ENCODE measurements at regions of chr5 and their contacts with region 1.

Region 1: GRCh38 chr5:148972958-148973357 is 89.9 kb downstream of the SH3TC2 start:
- DNase-seq: peak; percentile 92
- H3K4me3 ChIP-seq: no peak overlapping the region
- H3K27ac ChIP-seq: peak overlapping the region; percentile 99
- H3K4me1 ChIP-seq: peaks cover 46% of the 10 kb centered on the region
- H3K27me3 ChIP-seq: no peaks in the 10 kb centered on the region
- CTCF ChIP-seq: no peak
- POLR2A ChIP-seq: peak; percentile 69

Region 2: DNA sequence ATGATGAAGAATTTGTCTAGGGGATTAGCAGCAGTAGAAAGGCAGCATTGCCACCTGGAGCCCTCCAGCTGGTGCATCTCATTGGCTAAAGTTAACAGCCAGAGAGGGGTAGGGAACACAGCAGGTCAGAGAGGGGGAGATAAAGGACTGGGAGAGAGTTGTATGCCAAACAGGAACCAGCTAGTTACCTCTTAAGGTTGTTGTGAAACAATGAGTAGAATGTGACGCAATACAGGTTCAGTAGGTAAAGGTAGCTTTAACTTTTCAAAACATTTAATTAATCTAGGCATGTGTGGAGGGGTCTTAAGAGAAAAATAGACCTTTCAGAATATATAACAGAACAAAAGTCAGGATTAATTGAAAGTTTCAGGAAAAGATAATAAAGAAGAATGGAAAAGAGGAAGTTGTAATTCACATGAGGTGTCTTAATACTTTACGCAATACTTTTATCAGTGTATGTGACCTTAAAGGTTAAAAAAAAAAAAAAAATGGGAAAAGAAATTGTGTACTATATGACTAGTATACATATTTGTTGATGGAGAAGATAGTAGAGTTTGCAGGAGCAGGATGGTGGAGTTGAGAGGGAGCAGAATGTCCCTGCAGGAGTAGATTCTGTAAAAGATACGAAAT is 574.9 kb before region 1 on chr5:
- CTCF ChIA-PET with region 1: no interaction called
- POLR2A ChIA-PET with region 1: no interaction called
- dilution Hi-C with region 1: no loop called
- intact Hi-C with region 1: loop called (anchors 5 kb)
- DNase-seq: no peak
- H3K4me3 ChIP-seq: no peak overlapping the region
- H3K27ac ChIP-seq: peak overlapping the region; percentile 55
- H3K4me1 ChIP-seq: peaks cover 45% of the 10 kb centered on the region
- H3K27me3 ChIP-seq: no peaks in the 10 kb centered on the region
- CTCF ChIP-seq: no peak
- POLR2A ChIP-seq: no peak

Region 3: DNA sequence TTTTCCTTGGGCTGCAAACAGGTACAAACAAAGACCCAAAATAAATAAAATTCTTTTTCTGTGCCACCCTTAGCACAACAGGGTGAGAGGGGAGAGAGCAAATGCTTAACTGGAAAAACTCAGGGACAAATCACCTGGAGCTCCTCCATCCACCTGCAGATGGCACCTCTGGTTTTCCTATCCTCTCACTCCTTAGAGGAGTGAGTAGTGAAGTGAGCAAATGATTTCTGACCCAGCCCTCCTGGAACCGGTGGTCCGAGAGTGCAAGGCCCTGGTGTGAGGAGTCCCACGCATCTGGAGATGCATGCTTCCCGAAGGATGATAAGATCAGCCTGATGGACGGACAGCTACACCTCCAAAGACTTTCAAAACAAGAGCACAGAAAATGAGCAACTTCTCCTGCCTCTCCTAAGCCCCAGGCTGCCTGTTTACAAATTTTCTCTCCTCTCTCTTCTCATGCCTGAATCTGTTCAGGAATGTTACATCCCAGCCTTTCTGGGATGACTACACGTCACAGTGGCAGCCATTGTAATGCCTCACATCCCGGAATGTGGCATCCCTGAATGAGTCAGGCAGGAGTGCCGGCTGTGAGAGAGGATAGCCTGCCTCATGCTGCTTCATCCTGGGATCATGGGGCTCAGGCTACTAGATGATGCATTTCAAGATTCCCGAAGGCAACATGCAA is 60.1 kb before region 1 on chr5:
- CTCF ChIA-PET with region 1: interaction called, 3 read pairs
- POLR2A ChIA-PET with region 1: no interaction called
- dilution Hi-C with region 1: no loop called
- intact Hi-C with region 1: loop called (anchors 2 kb)
- DNase-seq: peak; percentile 79
- H3K4me3 ChIP-seq: no peak overlapping the region
- H3K27ac ChIP-seq: peak overlapping the region; percentile 96
- H3K4me1 ChIP-seq: peaks cover 55% of the 10 kb centered on the region
- H3K27me3 ChIP-seq: no peaks in the 10 kb centered on the region
- CTCF ChIP-seq: peak in 1 of 2 donors; percentile 4
- POLR2A ChIP-seq: no peak

Region 4: DNA sequence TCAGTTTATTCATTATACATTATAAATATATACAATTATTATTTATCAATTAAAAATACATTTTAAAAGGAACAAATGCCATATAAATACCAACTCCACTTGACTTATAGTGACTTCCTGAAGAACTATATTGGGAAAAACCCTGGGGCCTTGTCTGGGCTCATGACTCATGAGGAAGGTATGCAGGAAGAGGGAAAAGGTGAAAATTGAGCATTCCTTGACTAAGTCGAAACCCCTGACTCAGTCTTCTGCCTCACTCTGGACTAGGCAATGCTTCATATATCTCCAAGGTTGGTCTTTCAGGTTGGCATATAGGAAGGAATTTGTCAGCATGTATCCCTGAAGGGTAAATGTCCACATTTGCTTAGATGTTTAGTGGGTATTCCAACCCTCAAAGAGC is 11.4 kb after region 1 on chr5:
- CTCF ChIA-PET with region 1: interaction called, 9 read pairs
- POLR2A ChIA-PET with region 1: no interaction called
- dilution Hi-C with region 1: no loop called
- intact Hi-C with region 1: loop called (anchors 1 kb)
- DNase-seq: peak; percentile 52
- H3K4me3 ChIP-seq: no peak overlapping the region
- H3K27ac ChIP-seq: peak overlapping the region; percentile 61
- H3K4me1 ChIP-seq: peaks cover 15% of the 10 kb centered on the region
- H3K27me3 ChIP-seq: no peaks in the 10 kb centered on the region
- CTCF ChIP-seq: no peak
- POLR2A ChIP-seq: no peak

Region 5: GRCh38 chr5:148998174-148998797 is 25.3 kb after region 1 on chr5:
- CTCF ChIA-PET with region 1: interaction called, 14 read pairs
- POLR2A ChIA-PET with region 1: no interaction called
- dilution Hi-C with region 1: no loop called
- intact Hi-C with region 1: loop called (anchors 1 kb)
- DNase-seq: peak; percentile 68
- H3K4me3 ChIP-seq: no peak overlapping the region
- H3K27ac ChIP-seq: no peak overlapping the region
- H3K4me1 ChIP-seq: peaks cover 13% of the 10 kb centered on the region
- H3K27me3 ChIP-seq: no peaks in the 10 kb centered on the region
- CTCF ChIP-seq: peak; percentile 54 to 62
- POLR2A ChIP-seq: no peak

Region 6: DNA sequence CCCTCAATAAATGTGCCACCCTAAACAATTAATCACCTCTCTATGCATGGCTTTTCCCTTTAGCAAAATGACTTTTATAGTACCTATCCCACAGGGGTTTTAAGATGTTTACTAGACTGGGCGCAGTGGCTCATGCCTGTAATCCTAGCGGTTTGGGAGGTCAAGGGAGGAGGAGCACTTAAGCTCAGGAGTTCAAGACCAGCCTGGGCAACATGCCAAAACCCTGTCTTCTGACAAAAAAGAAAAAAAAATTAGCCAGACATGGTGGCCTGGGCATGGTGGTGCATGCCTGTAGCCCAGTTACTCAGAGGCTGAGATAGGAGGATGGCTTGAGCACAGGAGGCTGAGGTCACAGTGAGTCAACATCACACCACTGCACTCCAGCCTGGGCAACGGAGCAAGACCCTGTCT is 76.4 kb after region 1 on chr5:
- CTCF ChIA-PET with region 1: no interaction called
- POLR2A ChIA-PET with region 1: no interaction called
- dilution Hi-C with region 1: no loop called
- intact Hi-C with region 1: no loop called
- DNase-seq: no peak
- H3K4me3 ChIP-seq: no peak overlapping the region
- H3K27ac ChIP-seq: no peak overlapping the region
- H3K4me1 ChIP-seq: peaks cover 12% of the 10 kb centered on the region
- H3K27me3 ChIP-seq: no peaks in the 10 kb centered on the region
- CTCF ChIP-seq: no peak
- POLR2A ChIP-seq: no peak

Region 7: DNA sequence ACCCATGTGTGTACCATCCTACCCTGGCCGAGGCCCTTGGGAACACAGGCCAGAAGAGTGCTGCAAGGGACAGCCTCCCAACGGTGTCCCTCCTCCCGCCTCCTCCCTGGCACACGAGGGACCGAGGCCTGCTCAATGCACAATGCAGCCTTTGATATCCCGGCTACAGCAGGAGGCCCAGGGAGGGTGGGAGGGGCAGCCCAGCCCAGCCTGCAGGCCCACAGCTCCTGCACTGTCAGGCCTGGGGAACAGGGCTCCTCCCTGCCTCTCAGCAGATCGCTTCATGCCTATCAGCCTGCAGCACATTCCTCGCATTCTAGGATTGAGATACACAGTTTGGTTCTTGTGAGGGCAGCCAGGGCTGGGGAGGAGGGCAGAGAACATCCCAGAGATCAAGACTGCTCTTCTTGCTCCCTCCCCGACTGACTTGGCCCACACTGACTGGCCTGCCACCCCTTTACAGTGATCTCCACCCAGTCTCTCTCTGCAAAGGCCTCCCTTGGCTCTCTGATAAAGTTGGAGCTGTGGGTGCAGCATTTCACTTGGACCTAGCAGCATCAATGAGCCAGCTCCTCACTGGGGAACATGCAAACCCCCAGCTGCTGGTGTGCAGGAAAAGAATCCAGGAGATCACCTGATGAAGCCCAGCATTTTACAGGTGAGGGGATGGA is 90.2 kb after region 1 on chr5 and contains the start of gene SH3TC2:
- CTCF ChIA-PET with region 1: no interaction called
- POLR2A ChIA-PET with region 1: no interaction called
- dilution Hi-C with region 1: no loop called
- intact Hi-C with region 1: loop called (anchors 2 kb)
- DNase-seq: peak; percentile 28
- H3K4me3 ChIP-seq: no peak within 1 kb of the TSS
- H3K27ac ChIP-seq: peak within 1 kb of the TSS; percentile 97
- H3K4me1 ChIP-seq: peaks cover 39% of the 10 kb centered on the region
- H3K27me3 ChIP-seq: no peaks in the 10 kb centered on the region
- CTCF ChIP-seq: no peak
- POLR2A ChIP-seq: peak; percentile 18
- total RNA-seq, gene SH3TC2: 3.3 and 4.3 TPM in 2 replicates

Measured in endothelial cell of umbilical vein (primary cell).